Left colon (tissue), 2 donors: ENCODE measurements at regions of chr3 and their contacts with region 1.

Region 1: DNA sequence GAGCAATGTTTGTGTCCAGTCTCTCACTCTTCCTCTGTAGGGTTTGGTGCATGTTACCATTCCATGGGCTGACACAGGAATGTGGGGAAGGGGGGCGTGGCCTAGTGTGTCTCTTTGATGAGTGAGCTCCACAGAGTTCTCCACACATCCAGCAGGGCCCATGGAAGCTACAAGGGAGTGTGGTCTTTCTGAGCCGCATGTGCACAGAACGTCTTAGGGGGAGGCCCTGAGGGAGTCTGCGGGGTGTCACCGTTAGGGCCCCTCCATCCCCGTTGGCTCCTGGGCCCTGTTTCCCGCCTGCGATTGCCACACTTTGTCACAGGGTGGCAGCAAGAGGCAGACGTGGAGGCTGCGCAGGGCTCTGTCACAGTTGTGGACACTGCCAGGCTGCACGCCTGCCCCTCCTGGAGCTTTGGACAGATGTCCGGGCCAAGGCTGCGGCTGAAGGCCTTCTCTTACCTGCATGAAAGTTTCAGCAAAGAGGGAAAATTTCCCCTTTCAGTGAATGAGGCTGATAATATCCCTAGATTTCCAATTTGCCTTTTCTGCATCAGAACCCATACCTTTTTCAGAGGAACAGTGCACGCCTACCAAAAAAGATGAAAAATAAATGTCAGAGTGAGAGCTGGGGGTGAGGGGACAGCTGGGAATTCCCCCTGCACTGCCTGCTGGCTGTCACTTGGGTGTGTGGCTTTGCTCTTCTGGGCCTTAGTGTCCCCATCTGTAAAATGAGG is 24.3 kb downstream of the CACNA2D3 start:
- DNase-seq: peak in 1 of 2 donors; percentile 64
- ATAC-seq: peak; percentile 93

Region 2: DNA sequence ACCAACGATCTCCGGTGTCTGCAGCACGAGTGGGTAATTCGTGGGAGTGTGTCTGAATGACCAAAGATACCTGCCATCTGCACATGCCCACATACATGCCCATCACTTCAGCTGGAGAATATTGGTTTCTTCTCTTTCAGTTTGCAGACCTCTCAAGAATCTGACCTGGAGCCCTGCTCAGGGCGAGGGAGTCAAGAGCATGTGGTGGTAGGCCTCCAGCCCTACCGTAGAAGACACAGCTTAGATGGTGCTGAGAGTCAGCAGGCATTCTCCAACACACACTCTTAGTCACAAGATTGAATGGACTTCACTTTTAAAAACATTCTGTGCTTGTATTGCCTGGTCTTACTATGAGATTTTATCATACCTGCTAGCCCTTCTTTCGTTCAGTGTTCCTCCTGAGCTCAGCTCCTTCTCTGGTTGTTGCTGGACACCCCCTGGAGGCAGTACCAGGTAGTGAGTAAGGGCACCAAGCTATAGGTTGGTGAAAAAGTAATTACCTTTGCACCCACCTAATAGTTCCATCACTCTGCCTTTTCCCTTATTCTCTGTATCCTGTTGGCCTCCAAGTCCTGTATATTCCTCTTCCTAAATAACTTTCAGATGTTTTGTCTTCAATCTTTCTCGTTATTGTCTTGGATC is 227.7 kb after region 1 on chr3:
- intact Hi-C with region 1: loop called in 1 of 2 experiments (anchors 10 kb)
- DNase-seq: peak in 1 of 2 donors; percentile 44
- ATAC-seq: peak; percentile 80